CD4-positive, alpha-beta memory T cell (primary cell): ENCODE measurements at regions of chr5 and their contacts with region 1.

Region 1: DNA sequence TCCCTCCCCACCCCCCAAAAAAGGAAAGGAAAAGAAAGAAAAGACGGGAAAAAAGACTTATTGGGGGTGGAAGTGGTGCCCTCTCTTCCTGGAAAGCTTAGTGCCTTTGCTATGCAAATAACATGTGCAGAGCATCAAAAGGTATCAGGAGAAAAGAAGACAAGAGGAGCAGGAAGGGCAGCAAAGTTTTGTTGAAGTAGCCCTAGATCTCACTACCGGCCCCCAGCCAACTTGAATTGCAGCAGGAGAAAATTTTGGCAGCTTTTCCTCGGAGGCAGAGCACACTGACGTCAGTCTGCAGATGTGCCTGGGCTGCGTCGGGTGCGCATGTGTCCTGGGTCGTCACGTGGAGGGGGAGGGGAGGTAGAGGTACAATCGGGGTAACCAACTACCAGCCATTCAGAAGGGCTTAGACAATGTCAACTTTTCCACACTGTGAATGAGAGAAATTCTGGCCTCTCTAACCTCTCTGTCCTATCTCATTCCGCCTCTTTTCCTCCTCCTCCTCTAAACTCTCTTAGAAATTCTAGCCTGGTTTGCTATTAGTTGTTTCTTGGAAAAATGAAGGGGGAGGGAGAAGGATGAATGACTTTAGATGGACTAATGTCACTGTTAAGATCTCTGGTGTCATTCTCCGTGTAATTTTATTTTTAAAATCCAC is at the start of gene ADAMTS6:
- DNase-seq: peak; percentile 64 to 83 (median 69)
- H3K4me3 ChIP-seq: peak within 1 kb of the TSS; percentile 56 to 89
- H3K4me3 Mint-ChIP-seq: peak within 1 kb of the TSS in 3 of 8 donors; percentile 88 to 97 (median 94)
- H3K27ac ChIP-seq: peak within 1 kb of the TSS; percentile 62
- H3K27ac Mint-ChIP-seq: peak within 1 kb of the TSS; percentile 86 to 96 (median 93)
- H3K4me1 ChIP-seq: peaks cover 27% of the 10 kb centered on the region
- H3K4me1 Mint-ChIP-seq: peaks cover 5 to 22% (median 8%) of the 10 kb centered on the region in 4 donors
- H3K27me3 ChIP-seq: peaks cover 10% of the 10 kb centered on the region
- H3K27me3 Mint-ChIP-seq: peaks cover 0 to 3% of the 10 kb centered on the region in 2 donors
- total RNA-seq, gene ADAMTS6: 0.89 to 1.8 TPM

Region 2: GRCh38 chr5:64229163-64229774 is 1252.5 kb before region 1 on chr5:
- CTCF ChIA-PET with region 1: no interaction called
- POLR2A ChIA-PET with region 1: no interaction called
- intact Hi-C with region 1: loop called (anchors 2 kb)
- DNase-seq: peak in 2 of 5 donors; percentile 0 to 14
- H3K4me3 ChIP-seq: no peak overlapping the region
- H3K4me3 Mint-ChIP-seq: no peak overlapping the region
- H3K27ac ChIP-seq: no peak overlapping the region
- H3K27ac Mint-ChIP-seq: no peak overlapping the region
- H3K4me1 ChIP-seq: no peaks in the 10 kb centered on the region
- H3K4me1 Mint-ChIP-seq: peaks cover 0 to 1% (median 0%) of the 10 kb centered on the region in 4 donors
- H3K27me3 ChIP-seq: no peaks in the 10 kb centered on the region
- H3K27me3 Mint-ChIP-seq: no peaks in the 10 kb centered on the region

Region 3: GRCh38 chr5:64768358-64769312 is 713.1 kb before region 1 on chr5 and contains the starts of genes CWC27 and SREK1IP1:
- CTCF ChIA-PET with region 1: no interaction called
- POLR2A ChIA-PET with region 1: interaction called, 6 read pairs
- intact Hi-C with region 1: loop called (anchors 2 kb)
- DNase-seq: peak; percentile 85 to 88 (median 85)
- H3K4me3 ChIP-seq: peak within 1 kb of the TSS; percentile 83 to 94
- H3K4me3 Mint-ChIP-seq: peak within 1 kb of the TSS; percentile 98 to 100 (median 100)
- H3K27ac ChIP-seq: peak within 1 kb of the TSS; percentile 86
- H3K27ac Mint-ChIP-seq: peak within 1 kb of the TSS; percentile 95 to 100 (median 98)
- H3K4me1 ChIP-seq: peaks cover 47% of the 10 kb centered on the region
- H3K4me1 Mint-ChIP-seq: peaks cover 49 to 82% (median 57%) of the 10 kb centered on the region in 4 donors
- H3K27me3 ChIP-seq: no peaks in the 10 kb centered on the region
- H3K27me3 Mint-ChIP-seq: no peaks in the 10 kb centered on the region
- total RNA-seq, gene CWC27: 16.8 to 17.8 TPM
- total RNA-seq, gene SREK1IP1: 18.4 to 20.2 TPM

Region 4: DNA sequence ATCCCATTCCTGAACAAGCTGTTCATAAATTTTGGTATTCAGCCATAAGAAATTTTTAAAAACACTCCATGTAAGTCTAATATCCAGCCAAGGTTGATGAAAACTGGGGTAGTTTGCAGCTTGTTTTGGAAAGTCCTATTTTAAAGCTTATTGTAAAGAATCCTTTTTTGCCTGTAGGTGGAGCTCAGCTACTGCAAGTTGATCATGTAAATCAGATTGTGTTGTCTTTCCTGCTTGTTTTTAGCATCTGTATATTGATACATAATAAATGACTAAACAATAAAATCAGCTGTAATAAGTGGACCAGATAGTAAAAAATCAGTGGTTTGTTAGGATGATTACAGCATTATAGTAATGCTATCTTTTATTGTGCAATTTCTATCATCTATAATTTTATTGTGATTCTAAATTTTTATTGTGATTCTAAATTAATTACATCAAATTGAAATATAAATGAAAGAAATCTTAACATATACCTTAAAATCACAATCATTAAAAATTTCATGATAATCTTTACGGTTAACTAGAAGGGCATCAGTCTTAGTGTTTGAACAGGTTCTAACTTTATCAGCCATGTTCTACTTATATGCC is 670.6 kb before region 1 on chr5:
- CTCF ChIA-PET with region 1: interaction called, 73 read pairs
- POLR2A ChIA-PET with region 1: interaction called, 5 read pairs
- intact Hi-C with region 1: loop called (anchors 1 kb)
- DNase-seq: peak; percentile 27 to 44 (median 30)
- H3K4me3 ChIP-seq: no peak overlapping the region
- H3K4me3 Mint-ChIP-seq: no peak overlapping the region
- H3K27ac ChIP-seq: no peak overlapping the region
- H3K27ac Mint-ChIP-seq: no peak overlapping the region
- H3K4me1 ChIP-seq: no peaks in the 10 kb centered on the region
- H3K4me1 Mint-ChIP-seq: no peaks in the 10 kb centered on the region
- H3K27me3 ChIP-seq: no peaks in the 10 kb centered on the region
- H3K27me3 Mint-ChIP-seq: no peaks in the 10 kb centered on the region

Region 5: DNA sequence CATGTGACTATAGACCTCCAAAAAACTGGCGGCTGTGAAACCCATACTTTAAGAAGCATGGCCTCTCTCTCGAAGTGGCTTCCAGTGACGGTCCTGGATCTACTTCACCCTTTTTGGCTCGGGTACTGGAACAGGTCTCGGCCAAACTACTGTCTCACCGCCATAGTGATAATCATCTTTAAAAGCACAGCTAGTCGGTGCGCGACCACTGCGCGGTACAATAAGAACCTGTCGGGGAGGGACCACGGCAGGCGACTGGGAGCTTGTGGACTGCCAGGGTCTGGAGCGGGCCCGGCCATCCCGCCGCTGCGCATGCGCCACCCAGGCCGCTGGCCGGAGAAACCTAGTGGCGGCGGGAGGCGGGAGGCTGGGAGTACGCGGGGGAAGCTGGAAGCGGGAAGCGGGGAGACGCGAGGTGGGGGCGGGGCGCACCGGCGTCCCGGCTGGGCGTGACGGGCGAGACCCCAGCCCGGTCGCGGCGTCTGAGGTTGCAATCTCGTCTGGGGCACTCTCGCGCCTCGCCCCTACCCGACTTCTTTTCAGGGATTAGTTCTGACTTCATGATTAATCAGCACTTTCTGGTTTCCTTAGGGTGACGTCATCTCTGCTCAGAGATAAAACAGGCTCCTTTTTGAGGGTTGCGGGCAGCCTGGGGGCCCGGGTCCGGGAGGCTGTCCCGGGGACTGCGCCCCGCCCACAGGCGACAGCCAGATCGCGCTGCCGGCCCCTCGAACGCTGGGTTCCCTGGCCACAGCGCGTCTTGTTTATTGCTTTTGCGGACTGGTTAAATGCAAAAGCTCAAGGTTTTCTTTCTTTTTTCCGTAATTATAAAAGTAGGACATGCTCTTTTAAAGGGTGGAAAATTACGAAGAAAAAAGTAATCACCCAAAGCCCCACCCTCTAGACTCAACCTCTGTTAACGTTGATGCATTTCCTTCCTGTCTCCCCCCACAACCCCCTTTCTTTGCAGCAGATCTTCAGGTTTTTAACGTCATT is 446.3 kb before region 1 on chr5:
- CTCF ChIA-PET with region 1: interaction called, 12 read pairs
- POLR2A ChIA-PET with region 1: interaction called, 12 read pairs
- intact Hi-C with region 1: loop called (anchors 2 kb)
- DNase-seq: peak; percentile 86 to 94 (median 90)
- H3K4me3 ChIP-seq: peak overlapping the region; percentile 66 to 74
- H3K4me3 Mint-ChIP-seq: peak overlapping the region; percentile 66 to 92 (median 84)
- H3K27ac ChIP-seq: peak overlapping the region; percentile 90
- H3K27ac Mint-ChIP-seq: peak overlapping the region; percentile 80 to 100 (median 95)
- H3K4me1 ChIP-seq: peaks cover 30% of the 10 kb centered on the region
- H3K4me1 Mint-ChIP-seq: peaks cover 18 to 38% (median 28%) of the 10 kb centered on the region in 4 donors
- H3K27me3 ChIP-seq: no peaks in the 10 kb centered on the region
- H3K27me3 Mint-ChIP-seq: no peaks in the 10 kb centered on the region

Region 6: GRCh38 chr5:65102828-65103711 is 378.7 kb before region 1 on chr5:
- CTCF ChIA-PET with region 1: interaction called, 57 read pairs
- POLR2A ChIA-PET with region 1: interaction called, 13 read pairs
- intact Hi-C with region 1: loop called (anchors 1 kb)
- DNase-seq: peak; percentile 52 to 67 (median 57)
- H3K4me3 ChIP-seq: peak overlapping the region; percentile 59 to 60
- H3K4me3 Mint-ChIP-seq: peak overlapping the region; percentile 84 to 90 (median 88)
- H3K27ac ChIP-seq: peak overlapping the region; percentile 57
- H3K27ac Mint-ChIP-seq: peak overlapping the region; percentile 82 to 96 (median 91)
- H3K4me1 ChIP-seq: peaks cover 14% of the 10 kb centered on the region
- H3K4me1 Mint-ChIP-seq: peaks cover 17 to 48% (median 29%) of the 10 kb centered on the region in 4 donors
- H3K27me3 ChIP-seq: no peaks in the 10 kb centered on the region
- H3K27me3 Mint-ChIP-seq: no peaks in the 10 kb centered on the region